A549 (cell line): ENCODE measurements at regions of chr2 and their contacts with region 1.

Region 1: DNA sequence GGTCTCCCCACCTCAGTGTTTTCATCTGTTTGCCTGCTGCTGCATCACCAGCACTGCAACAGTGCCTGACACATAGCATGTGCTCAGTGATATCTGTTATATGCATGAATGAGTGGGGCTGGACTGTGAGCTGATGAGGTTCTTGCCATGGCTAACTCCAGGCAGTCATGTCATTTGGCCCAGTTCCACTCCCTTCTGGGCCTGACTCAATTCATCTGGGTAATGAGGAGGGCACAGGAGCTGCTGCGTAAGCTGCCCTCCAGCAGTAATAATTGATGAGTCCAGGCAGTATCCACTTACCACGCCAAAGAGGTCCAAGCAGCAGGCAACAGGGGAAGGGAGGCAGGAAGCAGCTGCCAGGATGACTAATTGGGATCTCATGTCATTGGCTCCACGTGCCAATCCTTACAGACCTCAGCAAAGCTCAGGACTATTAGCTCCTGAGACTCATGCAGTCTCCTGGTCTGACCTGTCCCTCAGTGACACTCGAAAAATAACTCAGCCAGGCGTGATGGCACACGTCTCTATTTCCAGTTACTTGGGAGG is 34.1 kb upstream of the MAT2A start:
- DNase-seq: peak; percentile 59 to 75
- ATAC-seq: peak; percentile 79 to 82
- H3K4me3 ChIP-seq: no peak overlapping the region
- H3K27ac ChIP-seq: peak overlapping the region; percentile 61 to 83
- H3K4me1 ChIP-seq: peaks cover 41% of the 10 kb centered on the region
- CTCF ChIP-seq: no peak; the same call in 2 of the 3 replicates
- EP300 ChIP-seq: no peak
- POLR2A ChIP-seq: no peak
- RAD21 ChIP-seq: 0 out of 5 replicates have a peak, but pooled peaks of 1 of the 2 experiments have one; percentile 14

Region 2: GRCh38 chr2:85266146-85267041 is 238.5 kb before region 1 on chr2:
- CTCF ChIA-PET with region 1: no interaction called
- POLR2A ChIA-PET with region 1: no interaction called
- DNase-seq: peak; percentile 67 to 74
- ATAC-seq: peak in 1 of 2 experiments; percentile 93; a peak in 3 of 6 replicates
- H3K4me3 ChIP-seq: no peak overlapping the region
- H3K27ac ChIP-seq: no peak overlapping the region
- H3K4me1 ChIP-seq: no peaks in the 10 kb centered on the region
- CTCF ChIP-seq: peak; percentile 92
- EP300 ChIP-seq: no peak
- POLR2A ChIP-seq: no peak
- RAD21 ChIP-seq: peak; percentile 55 to 68

Region 3: DNA sequence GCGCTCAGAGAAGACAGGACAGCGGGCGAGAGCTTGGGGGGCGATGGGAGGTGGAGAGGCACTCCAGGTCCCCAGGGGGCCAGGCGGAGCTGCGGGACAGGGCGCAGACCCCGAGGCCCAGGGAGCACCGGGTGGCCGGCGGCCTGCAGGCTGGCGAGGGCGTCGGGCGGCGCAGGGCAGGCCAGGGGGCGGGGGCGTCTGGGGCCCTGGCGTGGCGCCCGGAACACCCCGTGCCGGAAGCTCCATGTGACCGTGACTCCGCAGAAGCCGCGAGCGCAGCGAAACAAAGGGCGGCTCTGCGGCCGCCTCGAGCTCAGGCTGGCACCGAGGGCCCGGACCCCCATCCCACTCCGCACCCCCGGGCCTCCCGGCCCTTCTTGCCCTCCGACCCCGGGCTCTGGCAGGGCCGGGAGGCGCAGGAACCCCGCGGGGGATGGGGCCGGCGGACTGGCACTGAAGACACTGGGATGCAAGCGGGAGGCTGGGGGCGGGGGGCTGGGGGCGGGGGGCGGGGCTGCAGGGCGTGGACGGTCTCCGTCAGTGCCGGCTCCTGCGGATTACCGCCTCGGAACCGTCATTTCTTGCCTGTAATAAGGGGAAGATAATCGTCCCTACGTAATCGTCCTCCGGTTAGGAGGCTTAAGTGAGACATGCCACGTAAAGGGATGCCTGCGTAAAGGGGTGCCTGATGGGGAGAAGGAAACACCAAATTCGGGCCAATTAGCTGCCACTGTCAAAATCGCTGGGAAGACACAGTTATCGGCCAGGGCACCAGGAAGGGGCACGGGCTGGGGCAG is 67.2 kb before region 1 on chr2:
- CTCF ChIA-PET with region 1: interaction called, 3 read pairs
- POLR2A ChIA-PET with region 1: interaction called, 11 read pairs
- DNase-seq: peak; percentile 89
- ATAC-seq: peak; percentile 70 to 79
- H3K4me3 ChIP-seq: peak overlapping the region; percentile 33
- H3K27ac ChIP-seq: peak overlapping the region; percentile 91 to 95
- H3K4me1 ChIP-seq: peaks cover 61% of the 10 kb centered on the region
- CTCF ChIP-seq: no peak
- EP300 ChIP-seq: peak; percentile 61 to 78; a peak in 3 of 5 replicates
- POLR2A ChIP-seq: peak; percentile 40
- RAD21 ChIP-seq: peak in 1 of 2 experiments; percentile 57; a peak in 3 of 5 replicates

Region 4: GRCh38 chr2:85524336-85524933 is 19.6 kb after region 1 on chr2:
- CTCF ChIA-PET with region 1: interaction called, 13 read pairs
- POLR2A ChIA-PET with region 1: no interaction called
- DNase-seq: no peak
- ATAC-seq: peak; percentile 66 to 77; a peak in 5 of 6 replicates
- H3K4me3 ChIP-seq: no peak overlapping the region
- H3K27ac ChIP-seq: peak overlapping the region; percentile 9 to 65; a peak in 4 of 6 replicates
- H3K4me1 ChIP-seq: peaks cover 23% of the 10 kb centered on the region
- CTCF ChIP-seq: no peak
- EP300 ChIP-seq: no peak
- POLR2A ChIP-seq: no peak
- RAD21 ChIP-seq: no peak